ENCODE measurements at regions of chr5 and their contacts with region 1.

Region 1: DNA sequence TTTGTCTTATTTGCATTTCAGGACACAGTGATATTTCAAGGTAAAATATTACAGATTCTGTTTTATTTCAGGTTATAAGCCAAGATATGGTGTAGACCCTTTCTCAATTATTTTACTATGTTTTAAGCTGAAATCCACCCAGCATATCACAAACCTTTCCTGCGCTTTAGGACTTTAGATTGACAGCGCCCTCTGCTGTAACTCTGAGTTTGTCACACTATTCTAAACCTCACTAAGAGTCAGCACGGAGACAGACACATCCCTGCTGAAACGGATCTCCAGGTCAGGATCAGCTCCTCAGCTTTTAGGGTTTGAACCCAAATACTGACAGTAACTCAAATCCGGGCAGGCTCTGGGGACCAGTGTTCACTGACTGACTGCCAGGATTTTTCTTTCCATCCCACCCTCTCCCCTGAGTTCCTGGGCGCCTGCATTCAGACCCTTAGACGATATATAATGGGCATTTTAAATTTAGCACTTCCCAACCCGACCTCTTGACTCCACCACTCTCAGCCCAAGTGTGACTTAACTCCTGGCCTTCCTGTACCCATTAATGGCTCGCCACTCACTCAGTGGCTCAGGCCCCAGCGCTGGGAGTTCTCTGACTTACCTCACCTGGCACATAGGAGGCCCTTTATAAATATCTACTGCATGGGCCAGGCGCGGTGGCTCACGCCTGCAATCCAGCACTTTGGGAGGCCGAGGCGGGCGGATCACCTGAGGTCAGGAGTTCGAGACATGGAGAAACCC is 33.5 kb downstream of the TLX3 start:
- DNase-seq: peak; percentile 43 to 71 (median 54)
- ATAC-seq: peak; percentile 99
- H3K4me3 ChIP-seq: no peak overlapping the region
- H3K27ac ChIP-seq: no peak overlapping the region
- H3K4me1 ChIP-seq: no peaks in the 10 kb centered on the region
- H3K27me3 ChIP-seq: peaks cover 9 to 13% of the 10 kb centered on the region in 2 experiments; a peak in 4 of 5 replicates
- CTCF ChIP-seq: peak; percentile 65 to 79 (median 74)
- EP300 ChIP-seq: no peak
- POLR2A ChIP-seq: no peak
- RAD21 ChIP-seq: peak; percentile 56 to 74

Region 2: GRCh38 chr5:171207256-171207847 is 135.2 kb before region 1 on chr5:
- CTCF ChIA-PET with region 1: interaction called, 5 read pairs
- POLR2A ChIA-PET with region 1: no interaction called
- in situ Hi-C with region 1: no loop called
- intact Hi-C with region 1: loop called (anchors 1 kb)
- DNase-seq: peak; percentile 30 to 48 (median 33)
- ATAC-seq: peak; percentile 76
- H3K4me3 ChIP-seq: no peak overlapping the region
- H3K27ac ChIP-seq: no peak overlapping the region
- H3K4me1 ChIP-seq: no peaks in the 10 kb centered on the region
- H3K27me3 ChIP-seq: no peaks in the 10 kb centered on the region
- CTCF ChIP-seq: peak; percentile 50 to 60 (median 52); a peak in 4 of 6 replicates
- EP300 ChIP-seq: no peak
- POLR2A ChIP-seq: no peak
- RAD21 ChIP-seq: peak; percentile 54 to 65

Region 3: GRCh38 chr5:171272996-171273970 is 69.3 kb before region 1 on chr5:
- CTCF ChIA-PET with region 1: interaction called, 4 read pairs
- POLR2A ChIA-PET with region 1: interaction called, 3 read pairs
- in situ Hi-C with region 1: no loop called
- intact Hi-C with region 1: loop called (anchors 1 kb)
- DNase-seq: peak; percentile 13 to 34 (median 15)
- ATAC-seq: peak; percentile 85
- H3K4me3 ChIP-seq: no peak overlapping the region
- H3K27ac ChIP-seq: no peak overlapping the region
- H3K4me1 ChIP-seq: no peaks in the 10 kb centered on the region
- H3K27me3 ChIP-seq: no peaks in the 10 kb centered on the region
- CTCF ChIP-seq: peak in 2 of 3 experiments; percentile 43 to 58; a peak in 4 of 6 replicates
- EP300 ChIP-seq: no peak
- POLR2A ChIP-seq: no peak
- RAD21 ChIP-seq: peak; percentile 26 to 51; a peak in 3 of 4 replicates